Motor neuron (in vitro differentiated cells): ENCODE measurements at regions of chr2 and their contacts with region 1.

Region 1: DNA sequence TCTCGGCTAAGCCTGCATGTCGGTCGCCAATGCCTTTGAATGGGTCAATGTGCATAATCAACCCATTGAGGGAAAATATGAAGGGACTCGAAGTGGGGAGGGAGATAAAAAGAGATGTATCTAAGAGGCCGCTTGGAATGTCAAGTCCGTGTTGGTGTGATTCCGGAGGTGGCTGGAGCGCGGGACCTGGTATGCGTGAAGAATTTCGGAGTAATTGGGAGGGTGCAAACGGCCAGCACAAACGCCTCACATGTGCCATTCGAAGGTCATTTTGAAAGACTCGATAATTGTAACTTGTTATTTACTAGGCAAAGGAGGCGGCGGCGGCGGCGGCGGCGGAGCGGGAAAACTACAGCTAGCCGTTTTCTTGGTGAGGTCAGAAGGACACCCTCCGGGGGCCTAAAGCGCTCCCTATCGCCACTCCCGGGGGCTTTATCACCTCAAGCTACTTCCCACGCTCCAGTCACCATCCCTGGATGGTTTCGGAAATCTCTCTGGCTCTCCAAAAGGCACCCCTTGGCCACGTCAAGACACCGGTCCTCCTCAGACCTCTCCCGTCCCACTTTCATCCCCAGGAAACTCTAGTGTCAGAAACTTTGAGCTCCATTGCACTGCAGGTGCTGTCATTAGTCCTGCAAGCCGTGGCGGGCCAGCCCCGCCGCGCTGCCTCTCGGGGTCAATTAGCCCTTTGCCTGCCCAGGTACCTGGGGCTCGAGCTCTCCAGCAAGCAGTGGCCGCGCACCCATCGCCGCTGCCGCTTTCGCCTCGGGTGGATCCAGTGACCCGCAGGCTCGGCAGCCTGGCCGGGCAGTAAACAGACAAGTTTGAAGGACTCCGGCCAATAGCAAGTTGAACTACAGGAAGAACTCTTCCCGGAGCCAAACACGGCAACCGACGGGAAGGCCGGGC is 1.5 kb downstream of the ERBB4 start:
- ATAC-seq: peak; percentile 17 to 33 (median 24)
- H3K4me3 ChIP-seq: peak overlapping the region; percentile 57 to 78 (median 66)
- H3K27ac ChIP-seq: no peak overlapping the region
- H3K4me1 ChIP-seq: peaks cover 5 to 21% of the 10 kb centered on the region in 2 donors

Region 2: GRCh38 chr2:211745295-211746097 is 791.6 kb before region 1 on chr2:
- in situ Hi-C with region 1: loop called in 3 of 9 experiments (anchors 10 to 25 kb)
- ATAC-seq: peak; percentile 82 to 91 (median 88)
- H3K4me3 ChIP-seq: no peak overlapping the region
- H3K27ac ChIP-seq: no peak overlapping the region
- H3K4me1 ChIP-seq: peaks cover 14 to 20% of the 10 kb centered on the region in 2 donors

Region 3: DNA sequence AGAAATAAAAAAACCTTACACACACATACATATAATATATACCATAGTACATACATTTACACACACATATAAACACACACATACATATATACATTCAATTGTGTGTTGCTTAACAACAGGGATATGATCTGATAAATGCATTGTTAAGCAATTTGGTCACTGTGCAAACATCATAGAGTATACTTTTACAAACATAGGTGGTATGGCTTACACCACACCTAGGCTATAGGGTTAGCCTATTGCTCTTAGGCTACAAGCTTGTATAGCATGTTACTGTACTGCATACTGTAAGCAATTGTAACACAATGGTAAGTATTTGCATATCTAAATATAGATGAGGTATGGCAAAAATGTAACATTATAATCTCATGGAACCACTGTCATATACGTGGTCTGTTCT is 158.4 kb after region 1 on chr2:
- in situ Hi-C with region 1: no loop called
- ATAC-seq: no peak
- H3K4me3 ChIP-seq: no peak overlapping the region
- H3K27ac ChIP-seq: no peak overlapping the region
- H3K4me1 ChIP-seq: peaks cover 0 to 8% of the 10 kb centered on the region in 2 donors